Activated naive CD4-positive, alpha-beta T cell treated with anti-CD3 and anti-CD28 coated beads for 36 hours (primary cell): ENCODE measurements at regions of chr20 and their contacts with region 1.

Region 1: GRCh38 chr20:41317536-41318270 is at the start of gene ZHX3:
- DNase-seq: peak; percentile 94
- H3K4me3 Mint-ChIP-seq: peak within 1 kb of the TSS; percentile 85
- H3K27ac Mint-ChIP-seq: peak within 1 kb of the TSS; percentile 65
- H3K4me1 Mint-ChIP-seq: peaks cover 29% of the 10 kb centered on the region
- H3K27me3 Mint-ChIP-seq: no peaks in the 10 kb centered on the region
- total RNA-seq, gene ZHX3: 9.4 to 9.9 TPM

Region 2: GRCh38 chr20:40497899-40498691 is 819.6 kb before region 1 on chr20:
- CTCF ChIA-PET with region 1: no interaction called
- intact Hi-C with region 1: no loop called
- DNase-seq: no peak
- H3K4me3 Mint-ChIP-seq: no peak overlapping the region
- H3K27ac Mint-ChIP-seq: no peak overlapping the region
- H3K4me1 Mint-ChIP-seq: no peaks in the 10 kb centered on the region
- H3K27me3 Mint-ChIP-seq: peaks cover 3% of the 10 kb centered on the region

Region 3: DNA sequence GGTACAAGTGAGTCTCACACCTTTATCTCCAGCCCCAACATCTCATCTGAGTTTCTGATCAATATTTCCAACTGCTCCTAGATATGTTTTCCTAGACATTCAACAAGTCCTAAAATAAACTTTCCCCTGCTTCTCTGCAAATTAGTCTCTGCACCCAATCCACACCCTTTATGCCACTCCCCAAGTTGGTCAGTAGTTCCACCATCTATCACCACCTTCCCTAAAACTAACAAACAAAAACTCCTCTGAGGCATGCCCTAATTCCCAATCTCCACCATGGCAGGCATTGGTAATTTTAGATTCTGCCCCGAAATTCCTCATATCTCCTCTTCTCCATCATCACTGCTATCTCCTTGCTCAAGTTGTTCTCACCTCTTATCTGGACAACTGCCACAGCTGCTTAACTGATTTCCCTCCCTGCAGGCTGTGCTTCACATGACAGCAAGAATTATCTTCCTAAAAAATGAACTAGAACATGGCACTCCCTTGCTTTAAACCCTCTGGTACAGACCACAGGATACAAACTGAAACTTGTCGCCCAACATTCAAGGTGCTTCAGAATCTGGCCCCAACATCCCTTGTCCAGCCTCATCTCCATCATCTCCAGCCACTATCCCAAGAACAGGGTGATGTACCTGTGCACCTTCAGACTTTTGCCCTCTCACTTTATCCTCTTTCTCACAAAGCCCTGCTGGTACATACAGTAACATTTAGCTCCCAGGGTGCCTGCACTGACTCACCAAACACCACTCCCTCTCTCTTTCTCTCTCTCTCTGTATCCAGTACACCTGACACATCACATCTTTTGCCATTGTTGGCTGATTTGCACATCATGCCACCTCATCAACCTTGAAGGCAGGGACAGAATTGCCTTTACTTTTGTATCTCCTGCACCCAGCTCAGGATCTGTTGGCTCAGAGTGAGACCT is 55.6 kb before region 1 on chr20:
- CTCF ChIA-PET with region 1: no interaction called
- intact Hi-C with region 1: no loop called
- DNase-seq: no peak
- H3K4me3 Mint-ChIP-seq: no peak overlapping the region
- H3K27ac Mint-ChIP-seq: no peak overlapping the region
- H3K4me1 Mint-ChIP-seq: no peaks in the 10 kb centered on the region
- H3K27me3 Mint-ChIP-seq: no peaks in the 10 kb centered on the region

Region 4: DNA sequence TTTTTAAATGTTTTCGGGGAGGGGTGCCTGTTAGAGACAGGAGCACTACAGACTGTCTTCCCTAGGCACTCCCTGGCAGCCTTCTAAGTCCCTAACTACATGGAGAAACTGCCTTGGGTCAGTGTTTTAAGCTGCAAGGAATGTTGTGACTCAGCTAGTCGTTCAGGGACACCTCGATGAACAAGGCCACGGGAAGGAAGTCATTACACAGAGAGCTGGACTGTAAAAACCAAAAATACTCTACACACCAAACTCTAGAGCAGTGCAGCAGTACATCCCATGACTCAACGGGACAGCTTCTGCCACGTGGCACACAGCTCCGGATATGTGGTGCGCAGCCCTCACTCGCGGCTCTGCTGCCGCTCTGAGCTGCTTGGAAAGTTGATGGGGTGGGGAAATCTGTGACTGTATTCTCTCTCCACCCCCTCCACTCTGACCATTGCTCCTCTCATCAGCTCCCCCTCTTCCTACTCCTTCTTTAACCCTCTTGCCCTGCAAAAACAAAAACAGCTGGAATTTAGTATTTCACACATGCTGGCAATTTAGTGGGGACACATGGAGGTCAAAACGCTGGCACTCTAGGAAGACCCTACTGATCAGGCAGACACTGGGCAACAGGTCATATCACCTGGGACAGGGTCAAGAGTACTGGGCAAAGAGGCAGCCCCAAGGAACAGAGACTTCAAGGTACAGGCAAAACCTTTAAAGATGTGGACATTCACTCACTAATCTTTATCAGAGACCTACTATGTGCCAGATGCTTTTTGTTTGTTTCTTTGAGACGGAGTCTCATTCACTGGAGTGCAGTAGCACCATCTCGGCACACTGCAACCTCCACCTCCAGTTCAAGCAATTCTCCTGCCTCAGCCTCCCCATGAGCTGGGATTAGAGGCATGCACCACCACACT is 12.0 kb after region 1 on chr20:
- CTCF ChIA-PET with region 1: no interaction called
- intact Hi-C with region 1: loop called (anchors 1 kb)
- DNase-seq: peak; percentile 82
- H3K4me3 Mint-ChIP-seq: peak overlapping the region; percentile 3
- H3K27ac Mint-ChIP-seq: peak overlapping the region; percentile 25
- H3K4me1 Mint-ChIP-seq: peaks cover 11% of the 10 kb centered on the region
- H3K27me3 Mint-ChIP-seq: no peaks in the 10 kb centered on the region